ENCODE measurements at regions of chr2 and their contacts with region 1.

Region 1: GRCh38 chr2:203225423-203226039 is 13.3 kb upstream of the CYP20A1 start:
- DNase-seq: peak; percentile 23
- ATAC-seq: peak; percentile 88
- H3K4me3 Mint-ChIP-seq: no peak overlapping the region
- H3K27ac Mint-ChIP-seq: no peak overlapping the region
- H3K4me1 Mint-ChIP-seq: peaks cover 2% of the 10 kb centered on the region; the same call in 1 of the 2 replicates
- H3K27me3 Mint-ChIP-seq: no peaks in the 10 kb centered on the region
- CTCF ChIP-seq: peak; percentile 84

Region 2: DNA sequence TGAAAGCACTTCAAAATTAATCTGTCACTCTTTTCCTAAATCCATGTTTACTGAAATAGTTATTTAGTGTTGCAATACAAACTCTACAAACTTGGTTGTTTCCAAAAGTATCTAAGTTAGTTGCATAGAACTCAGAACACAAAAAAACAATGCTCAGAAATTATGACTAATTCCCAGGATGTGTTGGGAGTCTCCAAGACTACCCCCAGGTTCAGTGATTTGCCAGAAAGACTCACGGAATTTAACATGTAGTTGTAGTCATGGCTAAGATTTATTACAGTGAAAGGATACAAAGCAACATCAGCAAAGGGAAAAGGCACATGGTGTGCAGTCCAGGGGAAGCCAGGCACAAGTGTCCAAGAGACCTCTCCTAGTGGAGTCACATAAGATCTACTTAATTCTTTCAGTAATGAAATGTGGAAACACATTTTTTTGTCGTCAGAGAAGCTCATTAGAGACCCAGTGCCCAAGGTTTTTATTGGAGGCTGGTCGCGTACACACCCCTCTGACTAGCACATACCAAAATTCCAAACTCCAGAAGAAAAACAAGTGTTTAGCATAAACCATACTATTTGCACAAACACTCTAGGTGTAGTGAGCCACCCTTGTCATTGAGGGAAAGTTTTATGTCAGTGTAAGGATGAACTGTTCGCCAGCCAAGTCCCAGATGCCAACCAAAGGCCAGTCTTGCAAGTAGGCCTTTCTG is 30.0 kb before region 1 on chr2:
- CTCF ChIA-PET with region 1: no interaction called
- POLR2A ChIA-PET with region 1: no interaction called
- DNase-seq: no peak
- ATAC-seq: no peak
- H3K4me3 Mint-ChIP-seq: no peak overlapping the region
- H3K27ac Mint-ChIP-seq: no peak overlapping the region
- H3K4me1 Mint-ChIP-seq: no peaks in the 10 kb centered on the region
- H3K27me3 Mint-ChIP-seq: no peaks in the 10 kb centered on the region
- CTCF ChIP-seq: no peak

Region 3: DNA sequence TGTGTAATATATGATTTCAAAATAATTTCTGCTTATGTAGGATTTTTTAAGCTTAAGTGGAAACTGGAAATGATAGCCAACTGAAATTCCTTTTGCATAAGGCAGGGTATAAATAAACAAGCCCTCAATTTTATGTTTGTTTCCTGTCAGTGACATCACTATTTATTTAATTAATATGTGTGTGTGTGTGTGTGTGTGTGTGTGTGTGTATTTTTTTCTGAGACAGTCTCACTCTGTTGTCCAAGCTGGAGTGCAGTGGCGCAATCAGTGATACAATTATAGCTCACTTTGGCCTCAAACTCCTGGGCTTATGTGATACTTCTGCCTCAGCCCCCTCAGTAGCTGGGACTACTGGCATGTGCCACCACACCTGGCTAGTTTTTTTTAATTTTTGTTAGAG is 16.0 kb before region 1 on chr2:
- CTCF ChIA-PET with region 1: no interaction called
- POLR2A ChIA-PET with region 1: no interaction called
- DNase-seq: no peak
- ATAC-seq: no peak
- H3K4me3 Mint-ChIP-seq: no peak overlapping the region
- H3K27ac Mint-ChIP-seq: no peak overlapping the region
- H3K4me1 Mint-ChIP-seq: no peaks in the 10 kb centered on the region
- H3K27me3 Mint-ChIP-seq: no peaks in the 10 kb centered on the region
- CTCF ChIP-seq: no peak

Region 4: GRCh38 chr2:203238704-203239526 is 13.4 kb after region 1 on chr2 and contains the start of gene CYP20A1:
- CTCF ChIA-PET with region 1: interaction called, 14 read pairs
- POLR2A ChIA-PET with region 1: no interaction called
- DNase-seq: peak; percentile 97
- ATAC-seq: peak; percentile 89
- H3K4me3 Mint-ChIP-seq: peak within 1 kb of the TSS; percentile 96
- H3K27ac Mint-ChIP-seq: peak within 1 kb of the TSS; percentile 100
- H3K4me1 Mint-ChIP-seq: peaks cover 9% of the 10 kb centered on the region
- H3K27me3 Mint-ChIP-seq: no peaks in the 10 kb centered on the region
- CTCF ChIP-seq: no peak
- total RNA-seq, gene CYP20A1: 13.5 to 17.4 TPM (median 15.5 TPM) in 3 replicates

Region 5: DNA sequence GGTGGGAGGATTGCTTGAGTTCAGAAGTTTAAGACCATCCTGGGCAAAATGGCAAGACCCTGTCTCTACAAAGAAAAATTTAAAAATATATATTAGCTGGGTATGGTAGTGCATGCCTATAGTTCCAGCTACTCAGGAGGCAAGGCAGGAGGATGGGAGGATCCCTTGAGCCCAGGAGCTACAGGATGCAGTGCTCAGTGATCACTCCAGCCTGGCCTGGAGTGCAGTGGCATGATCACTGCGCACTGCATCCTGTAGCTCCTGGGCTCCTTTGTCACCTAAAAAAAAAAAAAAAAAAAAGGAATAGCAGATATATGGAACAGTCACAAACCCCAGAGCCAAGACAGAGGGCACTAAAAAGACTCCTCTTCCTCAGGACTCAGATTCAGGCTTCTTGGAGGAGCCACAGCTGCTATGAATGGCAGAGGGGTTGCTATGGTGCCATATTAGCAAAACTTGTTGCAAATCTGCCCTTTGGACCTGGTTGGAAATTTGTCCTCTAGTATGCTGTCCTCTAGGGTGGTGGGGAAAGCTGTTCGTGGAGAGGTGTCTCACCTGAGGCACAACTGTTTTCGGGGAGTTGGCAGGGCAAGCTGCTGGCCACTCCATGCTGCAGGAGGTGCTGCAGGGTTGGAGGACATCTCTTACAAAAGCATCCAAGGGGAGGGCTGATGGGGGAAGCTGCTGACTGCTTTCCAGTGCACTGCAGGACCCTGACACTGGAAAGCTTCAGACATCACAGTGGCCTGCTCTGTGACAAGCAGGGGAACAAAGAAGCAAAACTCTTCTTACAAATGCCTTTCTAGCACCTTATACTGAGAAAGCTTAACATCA is 36.0 kb after region 1 on chr2:
- CTCF ChIA-PET with region 1: no interaction called
- POLR2A ChIA-PET with region 1: no interaction called
- DNase-seq: peak; percentile 18
- ATAC-seq: peak; percentile 52; the same call in 1 of the 2 replicates
- H3K4me3 Mint-ChIP-seq: no peak overlapping the region
- H3K27ac Mint-ChIP-seq: no peak overlapping the region; the same call in 1 of the 2 replicates
- H3K4me1 Mint-ChIP-seq: peaks cover 11% of the 10 kb centered on the region
- H3K27me3 Mint-ChIP-seq: no peaks in the 10 kb centered on the region
- CTCF ChIP-seq: no peak